ENCODE measurements at regions of chr2 and their contacts with region 1.

Region 1: DNA sequence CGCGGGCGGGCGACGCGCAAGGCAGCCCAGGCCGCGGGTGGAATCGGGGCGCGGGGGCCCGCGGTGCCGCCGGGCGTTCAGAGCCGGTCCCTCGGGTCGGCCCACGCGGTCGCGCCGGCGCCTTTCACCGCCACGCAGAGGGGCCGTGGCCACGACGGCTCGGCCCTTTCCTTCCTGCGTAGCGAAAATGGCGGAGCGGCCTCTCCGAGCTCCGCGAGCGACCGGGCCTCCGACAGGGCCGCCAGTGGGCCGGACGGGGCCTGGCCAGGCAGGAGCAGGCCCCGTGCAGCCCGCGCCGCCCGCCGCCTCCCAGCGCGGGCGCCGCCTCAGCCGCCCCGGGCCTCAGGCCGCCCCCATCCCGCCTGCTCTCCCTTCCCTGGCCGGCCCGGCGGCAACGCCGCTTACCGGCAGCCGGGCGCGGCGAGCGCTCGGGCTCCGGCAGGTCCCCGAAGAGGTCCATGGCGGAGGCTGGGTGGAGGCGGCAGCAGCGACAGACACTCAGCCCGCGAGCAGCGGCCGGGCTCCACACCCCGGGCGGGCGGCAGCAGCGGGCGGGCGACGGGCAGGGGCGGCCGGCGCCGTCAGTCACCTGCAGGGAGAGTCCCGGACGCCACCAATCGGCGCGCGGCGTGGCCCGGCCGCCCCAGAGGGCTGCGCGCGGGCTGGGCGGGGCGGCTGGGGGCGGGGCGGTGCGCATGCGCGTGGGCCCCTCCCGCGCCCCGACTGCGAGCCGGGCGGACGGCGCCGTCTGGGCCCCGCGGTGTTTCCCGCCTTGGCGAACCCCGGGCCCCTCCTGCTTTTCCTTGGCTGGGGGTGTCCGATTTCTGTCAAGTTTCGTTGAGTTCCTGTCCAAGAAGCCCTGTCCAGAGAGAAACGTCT is at the start of gene ILKAP:
- DNase-seq: peak; percentile 74
- H3K4me3 ChIP-seq: peak within 1 kb of the TSS; percentile 83 to 91 (median 87)
- H3K27ac ChIP-seq: peak within 1 kb of the TSS; percentile 79
- H3K4me1 ChIP-seq: peaks cover 12% of the 10 kb centered on the region
- H3K27me3 ChIP-seq: peaks cover 11 to 12% of the 10 kb centered on the region in 2 experiments
- CTCF ChIP-seq: no peak
- POLR2A ChIP-seq: peak; percentile 90
- total RNA-seq, gene ILKAP: 47.5 and 49.2 TPM in 2 replicates

Region 2: DNA sequence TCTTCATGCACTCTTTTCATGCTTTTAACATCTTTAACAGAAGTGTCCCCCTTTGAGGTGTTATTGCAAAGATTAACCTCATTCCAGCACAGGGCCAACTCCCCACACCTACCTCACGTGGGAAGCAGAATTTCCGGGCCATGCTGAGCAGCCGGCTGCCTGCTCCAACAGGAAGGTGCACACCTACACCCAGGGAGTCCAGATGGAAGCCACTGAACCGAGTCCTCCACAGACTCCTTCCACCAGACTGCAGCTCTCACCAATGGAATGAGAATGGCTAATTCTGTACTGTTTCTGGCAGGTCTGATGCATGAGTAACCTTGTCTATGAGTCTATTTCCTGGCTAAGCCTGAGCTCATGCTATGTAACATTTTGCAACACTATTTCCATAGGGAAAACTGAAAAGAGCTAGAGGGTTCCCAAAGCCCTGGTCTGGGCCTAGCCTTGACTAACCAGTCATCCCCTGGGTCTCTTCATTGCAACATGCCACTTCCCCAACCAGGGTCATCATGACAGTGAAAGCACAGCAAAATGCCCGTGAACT is 33.6 kb before region 1 on chr2:
- CTCF ChIA-PET with region 1: no interaction called
- POLR2A ChIA-PET with region 1: no interaction called
- dilution Hi-C with region 1: no loop called
- intact Hi-C with region 1: loop called (anchors 1 kb)
- DNase-seq: peak; percentile 81
- H3K4me3 ChIP-seq: no peak overlapping the region
- H3K27ac ChIP-seq: peak overlapping the region; percentile 89
- H3K4me1 ChIP-seq: peaks cover 29% of the 10 kb centered on the region
- H3K27me3 ChIP-seq: no peaks in the 10 kb centered on the region
- CTCF ChIP-seq: no peak
- POLR2A ChIP-seq: no peak